PC-3 (cell line): ENCODE measurements at regions of chr11 and their contacts with region 1.

Region 1: DNA sequence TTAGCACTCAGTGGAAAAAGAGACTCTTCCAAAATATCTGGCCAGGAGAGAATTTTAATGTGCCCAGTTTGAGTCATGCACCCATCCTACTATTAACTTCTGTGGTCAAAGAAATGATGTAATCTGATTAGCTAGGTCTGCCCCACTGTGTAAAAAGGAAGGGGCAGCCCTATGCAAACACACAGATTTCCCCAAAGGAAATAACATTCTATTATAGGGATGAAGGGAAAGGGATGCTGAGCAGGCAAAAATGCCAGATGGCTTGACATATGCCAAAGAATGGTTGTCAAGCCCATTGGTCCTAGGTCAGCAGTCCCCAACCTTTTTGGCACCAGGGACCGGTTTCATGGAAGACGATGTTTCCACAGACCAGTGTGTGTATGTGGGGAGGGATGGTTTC is 43.3 kb upstream of the PAK1 start:
- DNase-seq: peak; percentile 82
- ATAC-seq: peak; percentile 59
- H3K4me3 ChIP-seq: no peak overlapping the region
- H3K27ac ChIP-seq: no peak overlapping the region
- H3K4me1 ChIP-seq: peaks cover 28% of the 10 kb centered on the region
- H3K27me3 ChIP-seq: peaks cover 16% of the 10 kb centered on the region
- CTCF ChIP-seq: no peak

Region 2: DNA sequence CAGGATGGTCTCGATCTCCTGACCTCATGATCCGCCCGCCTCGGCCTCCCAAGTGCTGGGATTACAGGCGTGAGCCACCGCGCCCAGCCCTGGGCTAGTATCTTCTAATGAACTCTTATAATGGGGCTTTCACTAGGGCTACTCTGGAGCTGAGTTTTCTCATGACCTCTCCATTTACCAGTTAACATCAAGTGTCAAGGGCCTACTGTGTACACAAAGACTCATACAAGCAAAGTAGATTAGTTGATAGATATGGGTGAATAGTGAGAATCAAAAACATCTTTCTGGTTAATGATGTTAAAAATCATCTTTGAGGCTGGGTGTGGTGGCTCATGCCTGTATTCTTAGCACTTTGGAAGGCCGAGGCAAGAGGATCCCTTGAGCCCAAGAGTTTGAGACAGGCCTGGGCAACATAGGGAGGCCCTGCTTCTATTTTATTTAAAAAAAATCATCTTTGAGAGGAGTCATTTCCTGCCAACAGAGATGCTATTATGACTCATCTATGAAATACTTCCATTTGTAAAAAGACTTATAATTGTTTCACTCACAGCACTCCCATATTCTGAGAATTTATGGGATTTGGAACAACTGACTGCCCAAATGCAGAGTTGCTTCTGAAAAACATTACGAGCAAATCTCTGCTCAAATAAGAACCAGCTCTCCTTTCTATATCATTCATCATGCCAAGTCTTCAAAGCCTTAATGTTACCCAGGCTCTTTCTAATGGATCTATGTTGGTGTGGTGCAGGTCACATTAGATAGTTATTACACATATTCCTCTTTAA is 272.8 kb before region 1 on chr11:
- CTCF ChIA-PET with region 1: no interaction called
- POLR2A ChIA-PET with region 1: no interaction called
- intact Hi-C with region 1: loop called (anchors 2 kb)
- DNase-seq: peak; percentile 82
- ATAC-seq: peak; percentile 81
- H3K4me3 ChIP-seq: no peak overlapping the region
- H3K27ac ChIP-seq: peak overlapping the region; percentile 94
- H3K4me1 ChIP-seq: peaks cover 31% of the 10 kb centered on the region
- H3K27me3 ChIP-seq: no peaks in the 10 kb centered on the region
- CTCF ChIP-seq: no peak

Region 3: DNA sequence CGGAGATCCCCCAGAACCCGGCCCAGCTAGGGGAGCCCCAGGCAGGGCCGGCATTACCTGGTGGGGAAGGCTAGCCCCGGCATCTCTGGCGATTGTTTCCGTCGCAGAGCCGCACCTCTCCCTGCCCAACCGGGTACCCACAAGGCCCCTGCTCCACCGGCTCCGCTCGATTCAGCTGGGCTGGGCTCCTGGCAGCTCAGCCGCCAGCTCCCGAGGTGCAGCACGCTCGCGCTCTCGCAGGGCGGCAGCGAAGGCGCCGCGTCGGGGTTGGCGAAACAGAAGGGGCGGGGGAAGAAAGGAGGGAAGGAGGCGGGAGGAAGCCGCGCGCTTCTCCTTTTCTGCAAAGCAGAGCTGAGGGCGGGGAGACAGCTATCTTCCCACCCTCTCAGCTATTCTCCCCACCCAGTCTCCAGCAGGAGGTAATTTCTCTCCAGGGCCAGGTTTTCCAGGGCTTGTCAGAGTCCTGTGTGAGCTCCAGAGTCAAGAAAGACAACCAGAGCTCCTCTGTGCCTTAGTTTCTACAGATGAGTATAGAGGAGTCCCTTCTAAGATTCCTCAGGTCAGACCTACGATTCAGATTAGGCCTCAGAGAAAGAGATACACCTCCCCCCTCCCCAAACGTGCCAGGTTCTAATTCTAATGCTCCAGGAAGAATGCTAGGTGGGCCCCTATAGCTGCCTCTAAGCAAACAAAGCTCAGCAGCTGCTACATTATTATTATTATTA is 105.3 kb before region 1 on chr11:
- CTCF ChIA-PET with region 1: no interaction called
- POLR2A ChIA-PET with region 1: no interaction called
- intact Hi-C with region 1: loop called (anchors 5 kb)
- DNase-seq: peak; percentile 87
- ATAC-seq: peak; percentile 68
- H3K4me3 ChIP-seq: peak overlapping the region; percentile 63
- H3K27ac ChIP-seq: no peak overlapping the region
- H3K4me1 ChIP-seq: peaks cover 33% of the 10 kb centered on the region
- H3K27me3 ChIP-seq: no peaks in the 10 kb centered on the region
- CTCF ChIP-seq: no peak

Region 4: GRCh38 chr11:77467993-77468392 is 49.2 kb before region 1 on chr11:
- CTCF ChIA-PET with region 1: no interaction called
- POLR2A ChIA-PET with region 1: no interaction called
- intact Hi-C with region 1: loop called (anchors 2 kb)
- DNase-seq: no peak
- ATAC-seq: no peak
- H3K4me3 ChIP-seq: no peak overlapping the region
- H3K27ac ChIP-seq: no peak overlapping the region
- H3K4me1 ChIP-seq: peaks cover 34% of the 10 kb centered on the region
- H3K27me3 ChIP-seq: no peaks in the 10 kb centered on the region
- CTCF ChIP-seq: no peak

Region 5: GRCh38 chr11:78079232-78080083 is 562.2 kb after region 1 on chr11 and contains the start of gene NDUFC2:
- CTCF ChIA-PET with region 1: no interaction called
- POLR2A ChIA-PET with region 1: no interaction called
- intact Hi-C with region 1: no loop called
- DNase-seq: peak; percentile 87
- ATAC-seq: peak; percentile 89
- H3K4me3 ChIP-seq: peak within 1 kb of the TSS; percentile 86
- H3K27ac ChIP-seq: peak within 1 kb of the TSS; percentile 22
- H3K4me1 ChIP-seq: peaks cover 33% of the 10 kb centered on the region
- H3K27me3 ChIP-seq: no peaks in the 10 kb centered on the region
- CTCF ChIP-seq: no peak
- total RNA-seq, gene NDUFC2: 304 and 322 TPM in 2 replicates